ENCODE measurements at regions of chr3 and their contacts with region 1.

Region 1: DNA sequence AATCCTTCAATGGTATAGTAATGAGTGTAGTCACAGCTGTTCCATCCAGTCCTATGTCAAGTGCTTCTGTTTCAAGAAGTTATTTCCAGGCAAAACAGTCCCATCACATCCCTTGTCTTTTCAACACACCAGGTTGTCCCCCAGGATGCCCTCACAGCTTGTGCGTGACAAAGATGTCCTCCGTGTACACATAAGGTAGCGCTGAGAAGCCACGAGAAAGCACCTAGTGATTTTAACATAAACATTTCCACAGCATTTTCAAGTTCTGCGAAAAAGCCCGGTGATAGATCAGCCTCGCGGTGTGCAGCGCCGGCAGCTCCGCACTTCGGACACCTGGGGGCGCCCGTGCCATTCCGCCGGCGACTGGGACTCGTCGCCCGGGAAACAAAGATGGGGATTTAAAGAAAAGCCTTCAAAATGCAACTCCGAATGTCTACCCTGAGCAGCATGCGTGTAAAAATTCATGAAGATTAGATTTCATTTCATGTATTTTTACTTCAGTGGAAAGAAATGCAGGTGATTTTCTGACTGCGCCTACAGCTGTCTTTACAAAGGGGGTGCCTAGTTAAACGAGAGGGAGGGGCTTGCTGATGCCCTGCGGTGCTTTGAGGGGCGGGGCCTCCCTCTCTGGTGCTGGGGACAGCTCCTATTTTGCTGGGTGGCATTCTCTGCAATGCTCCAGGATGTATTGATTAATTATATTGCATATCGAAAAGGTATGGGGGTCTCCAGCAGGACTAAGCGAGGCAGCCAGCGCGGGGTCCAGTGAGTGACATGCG is 49.9 kb downstream of the KY start:
- DNase-seq: no peak

Region 2: DNA sequence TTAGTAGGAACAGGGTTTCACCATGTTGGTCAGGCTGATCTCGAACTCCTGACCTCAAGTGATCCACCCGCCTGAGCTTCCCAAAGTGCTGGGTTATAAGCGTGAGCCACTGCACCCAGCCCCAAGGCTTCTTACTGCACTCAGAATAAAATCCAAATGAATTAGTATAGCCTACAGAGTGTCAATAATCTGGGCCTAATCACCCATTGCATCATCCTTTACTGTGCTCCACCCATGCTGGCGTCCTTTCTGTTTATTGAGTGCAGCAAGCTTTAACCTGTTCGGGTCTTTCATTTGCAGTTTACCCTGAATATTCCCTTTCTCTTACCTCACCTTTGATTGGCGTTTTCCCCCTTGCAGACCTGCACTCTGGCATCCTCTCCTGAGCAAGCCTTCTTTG is 37.3 kb before region 1 on chr3:
- intact Hi-C with region 1: no loop called
- DNase-seq: no peak

Region 3: GRCh38 chr3:135895106-135895733 is 1294.3 kb after region 1 on chr3:
- intact Hi-C with region 1: loop called in 1 of 2 experiments (anchors 10 kb)
- DNase-seq: peak; percentile 88